ENCODE measurements at regions of chr1 and their contacts with region 1.

Region 1: GRCh38 chr1:153670859-153671627 is at the start of gene ILF2:
- DNase-seq: peak; percentile 100
- H3K4me3 Mint-ChIP-seq: no peak within 1 kb of the TSS
- H3K27ac Mint-ChIP-seq: no peak within 1 kb of the TSS
- H3K4me1 Mint-ChIP-seq: peaks cover 5% of the 10 kb centered on the region
- H3K27me3 Mint-ChIP-seq: no peaks in the 10 kb centered on the region
- CTCF ChIP-seq: peak; percentile 27
- total RNA-seq, gene ILF2: 348 and 374 TPM in 2 replicates

Region 2: DNA sequence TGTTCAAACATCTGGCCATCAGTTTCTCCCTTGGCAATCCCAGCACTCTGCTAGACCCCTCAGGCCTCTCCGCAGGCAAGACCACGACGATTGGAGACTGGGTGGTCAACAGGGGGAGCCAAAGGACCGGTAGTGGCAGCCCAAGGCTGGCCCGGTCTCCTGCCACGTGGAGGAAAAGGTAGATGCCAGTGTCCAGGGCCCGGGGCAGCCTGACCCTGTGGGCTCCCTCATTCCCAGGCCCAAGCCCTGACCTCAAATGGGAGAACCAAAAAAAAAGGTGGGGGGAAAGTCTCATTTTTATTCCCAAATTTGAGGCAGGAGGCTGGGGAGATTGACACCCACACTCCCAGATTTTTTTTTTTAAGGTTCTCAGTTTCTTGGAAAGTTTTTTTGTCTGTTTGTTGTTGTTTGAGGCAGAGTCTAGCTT is 160.0 kb before region 1 on chr1:
- CTCF ChIA-PET with region 1: interaction called, 4 read pairs
- POLR2A ChIA-PET with region 1: interaction called, 4 read pairs
- intact Hi-C with region 1: loop called (anchors 1 kb)
- DNase-seq: peak; percentile 87
- H3K4me3 Mint-ChIP-seq: no peak overlapping the region
- H3K27ac Mint-ChIP-seq: peak overlapping the region; percentile 73
- H3K4me1 Mint-ChIP-seq: peaks cover 60% of the 10 kb centered on the region
- H3K27me3 Mint-ChIP-seq: no peaks in the 10 kb centered on the region
- CTCF ChIP-seq: peak; percentile 100

Region 3: GRCh38 chr1:153577624-153578051 is 93.4 kb before region 1 on chr1:
- CTCF ChIA-PET with region 1: interaction called, 29 read pairs
- POLR2A ChIA-PET with region 1: interaction called, 27 read pairs
- intact Hi-C with region 1: loop called (anchors 1 kb)
- DNase-seq: no peak
- H3K4me3 Mint-ChIP-seq: no peak overlapping the region
- H3K27ac Mint-ChIP-seq: no peak overlapping the region
- H3K4me1 Mint-ChIP-seq: peaks cover 25% of the 10 kb centered on the region
- H3K27me3 Mint-ChIP-seq: no peaks in the 10 kb centered on the region
- CTCF ChIP-seq: no peak

Region 4: GRCh38 chr1:153626922-153627796 is 43.9 kb before region 1 on chr1 and contains the start of gene S100A13:
- CTCF ChIA-PET with region 1: interaction called, 11 read pairs
- POLR2A ChIA-PET with region 1: interaction called, 9 read pairs
- intact Hi-C with region 1: loop called (anchors 2 kb)
- DNase-seq: peak; percentile 98
- H3K4me3 Mint-ChIP-seq: peak within 1 kb of the TSS; percentile 84
- H3K27ac Mint-ChIP-seq: peak within 1 kb of the TSS; percentile 91
- H3K4me1 Mint-ChIP-seq: peaks cover 38% of the 10 kb centered on the region
- H3K27me3 Mint-ChIP-seq: no peaks in the 10 kb centered on the region
- CTCF ChIP-seq: peak; percentile 86
- total RNA-seq, gene S100A13: 210 and 236 TPM in 2 replicates

Region 5: GRCh38 chr1:153658400-153659174 is 12.5 kb before region 1 on chr1 and contains the start of gene SNAPIN:
- CTCF ChIA-PET with region 1: interaction called, 7 read pairs
- POLR2A ChIA-PET with region 1: interaction called, 72 read pairs
- intact Hi-C with region 1: no loop called
- DNase-seq: peak; percentile 95
- H3K4me3 Mint-ChIP-seq: peak within 1 kb of the TSS; percentile 92
- H3K27ac Mint-ChIP-seq: peak within 1 kb of the TSS; percentile 91
- H3K4me1 Mint-ChIP-seq: peaks cover 5% of the 10 kb centered on the region
- H3K27me3 Mint-ChIP-seq: no peaks in the 10 kb centered on the region
- CTCF ChIP-seq: no peak
- total RNA-seq, gene SNAPIN: 55.9 and 63.7 TPM in 2 replicates

Region 6: DNA sequence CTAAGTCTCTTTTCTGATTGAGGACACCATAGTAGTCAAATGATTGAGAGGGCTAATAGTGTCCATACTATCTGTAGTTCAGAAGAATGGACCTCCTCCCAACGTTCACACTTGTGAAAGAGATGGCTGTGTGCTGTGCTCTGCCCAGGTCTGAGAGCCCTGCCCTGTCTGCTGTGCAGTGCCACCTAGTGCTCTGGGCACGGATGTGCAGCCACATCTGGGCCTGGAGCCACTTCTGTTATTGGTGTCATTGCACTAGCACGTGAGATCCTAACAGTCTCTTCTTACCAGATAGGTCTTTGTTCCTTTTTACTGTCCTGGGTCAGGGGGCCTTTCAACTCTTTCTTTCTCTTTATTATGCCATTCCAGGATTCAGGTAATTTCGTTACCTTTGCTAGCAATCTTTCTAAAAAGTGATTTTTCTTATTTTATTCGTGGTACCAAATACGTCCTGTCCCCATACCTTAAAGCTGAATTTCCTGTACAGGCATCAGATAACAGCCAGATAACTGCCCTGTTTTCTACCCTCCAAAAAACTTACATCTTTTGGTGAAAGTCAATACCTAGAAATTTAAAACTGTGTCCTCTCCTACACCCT is 78.5 kb after region 1 on chr1:
- CTCF ChIA-PET with region 1: interaction called, 273 read pairs
- POLR2A ChIA-PET with region 1: interaction called, 3 read pairs
- intact Hi-C with region 1: no loop called
- DNase-seq: peak; percentile 89
- H3K4me3 Mint-ChIP-seq: no peak overlapping the region
- H3K27ac Mint-ChIP-seq: no peak overlapping the region
- H3K4me1 Mint-ChIP-seq: peaks cover 5% of the 10 kb centered on the region
- H3K27me3 Mint-ChIP-seq: no peaks in the 10 kb centered on the region
- CTCF ChIP-seq: peak; percentile 98

Region 7: DNA sequence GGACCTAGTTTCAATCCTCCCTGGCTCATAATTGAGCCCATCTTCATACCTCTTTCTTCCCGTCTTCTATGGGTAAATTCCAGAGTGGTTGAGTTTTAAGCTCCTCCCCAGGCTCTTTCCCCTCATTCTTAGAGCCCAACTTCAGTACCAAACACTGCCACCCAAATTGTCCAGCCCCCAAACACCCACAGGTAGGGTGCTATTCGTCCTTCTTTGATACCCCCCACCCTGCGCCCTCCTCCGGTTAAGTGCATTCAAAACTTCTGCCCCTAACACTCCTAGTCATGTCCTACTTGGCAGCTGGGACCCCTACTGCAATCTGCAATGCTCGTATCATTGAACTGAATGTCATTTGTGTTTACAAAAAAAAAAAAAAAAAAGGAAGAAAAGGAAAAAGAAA is 138.3 kb after region 1 on chr1:
- CTCF ChIA-PET with region 1: no interaction called
- POLR2A ChIA-PET with region 1: no interaction called
- intact Hi-C with region 1: no loop called
- DNase-seq: no peak
- H3K4me3 Mint-ChIP-seq: no peak overlapping the region
- H3K27ac Mint-ChIP-seq: no peak overlapping the region
- H3K4me1 Mint-ChIP-seq: peaks cover 27% of the 10 kb centered on the region
- H3K27me3 Mint-ChIP-seq: no peaks in the 10 kb centered on the region
- CTCF ChIP-seq: no peak

Region 8: DNA sequence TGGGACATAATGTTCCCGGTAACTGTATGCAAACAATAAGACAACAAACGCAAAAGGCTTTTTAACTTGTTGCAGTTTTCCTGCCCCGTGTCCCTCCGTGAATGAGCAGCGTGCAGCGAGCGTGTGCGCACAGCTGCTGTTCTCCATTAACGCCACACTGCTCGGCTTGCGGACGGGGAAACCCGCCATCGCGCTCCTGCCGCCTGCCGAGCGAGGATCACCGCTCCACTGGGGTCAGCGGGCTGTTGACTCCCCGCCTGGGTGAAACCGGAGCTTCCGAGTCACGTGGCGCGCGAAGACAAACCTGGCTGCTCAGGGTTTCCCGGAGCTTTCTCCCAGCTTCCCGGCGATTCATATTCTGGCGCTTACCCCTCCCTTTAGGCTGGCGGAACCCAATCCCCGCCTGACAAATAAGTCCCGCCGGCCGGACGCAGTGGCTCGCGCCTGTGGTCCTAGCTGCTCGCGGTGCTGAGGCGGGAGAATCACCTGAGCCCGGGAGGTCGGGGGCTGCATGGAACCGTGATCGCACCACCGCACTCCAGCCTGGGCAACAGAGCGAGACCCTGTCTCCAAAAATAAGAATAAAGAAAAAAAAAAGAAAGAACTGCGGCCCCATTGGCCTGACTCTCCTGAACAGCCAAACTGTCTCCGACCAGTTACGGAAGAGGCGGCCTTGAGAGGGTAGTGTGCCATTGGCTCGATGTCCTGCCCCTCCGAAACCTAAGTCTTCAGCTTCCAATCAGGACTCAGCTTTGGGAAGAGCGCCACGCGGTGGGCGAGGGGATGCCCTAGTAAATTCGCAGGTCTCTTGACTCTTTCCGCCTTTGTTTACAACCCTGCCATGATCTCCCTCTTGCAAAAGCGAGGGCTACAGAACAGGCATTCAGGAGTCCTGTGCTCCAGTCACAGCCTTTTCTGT is 296.3 kb after region 1 on chr1 and contains the start of gene CREB3L4:
- CTCF ChIA-PET with region 1: no interaction called
- POLR2A ChIA-PET with region 1: interaction called, 16 read pairs
- intact Hi-C with region 1: no loop called
- DNase-seq: peak; percentile 100
- H3K4me3 Mint-ChIP-seq: peak within 1 kb of the TSS; percentile 95
- H3K27ac Mint-ChIP-seq: peak within 1 kb of the TSS; percentile 94
- H3K4me1 Mint-ChIP-seq: peaks cover 40% of the 10 kb centered on the region
- H3K27me3 Mint-ChIP-seq: no peaks in the 10 kb centered on the region
- CTCF ChIP-seq: peak; percentile 32
- total RNA-seq, gene CREB3L4: 14.7 and 17.6 TPM in 2 replicates